ENCODE measurements at regions of chr11 and their contacts with region 1.

Region 1: GRCh38 chr11:22920939-22921565 is 60.8 kb upstream of the CCDC179 start:
- DNase-seq: no peak
- H3K4me3 ChIP-seq: peak overlapping the region in 1 of 2 donors; percentile 26
- H3K27ac ChIP-seq: peak overlapping the region in 1 of 2 donors; percentile 62
- H3K4me1 ChIP-seq: peaks cover 0 to 46% (median 2%) of the 10 kb centered on the region in 4 donors
- H3K27me3 ChIP-seq: no peaks in the 10 kb centered on the region
- CTCF ChIP-seq: peak; percentile 65 to 67

Region 2: GRCh38 chr11:23063276-23063675 is 142.2 kb after region 1 on chr11:
- intact Hi-C with region 1: no loop called
- DNase-seq: no peak
- H3K4me3 ChIP-seq: no peak overlapping the region
- H3K27ac ChIP-seq: no peak overlapping the region
- H3K4me1 ChIP-seq: peaks cover 0 to 4% (median 0%) of the 10 kb centered on the region in 4 donors
- H3K27me3 ChIP-seq: no peaks in the 10 kb centered on the region
- CTCF ChIP-seq: no peak

Region 3: DNA sequence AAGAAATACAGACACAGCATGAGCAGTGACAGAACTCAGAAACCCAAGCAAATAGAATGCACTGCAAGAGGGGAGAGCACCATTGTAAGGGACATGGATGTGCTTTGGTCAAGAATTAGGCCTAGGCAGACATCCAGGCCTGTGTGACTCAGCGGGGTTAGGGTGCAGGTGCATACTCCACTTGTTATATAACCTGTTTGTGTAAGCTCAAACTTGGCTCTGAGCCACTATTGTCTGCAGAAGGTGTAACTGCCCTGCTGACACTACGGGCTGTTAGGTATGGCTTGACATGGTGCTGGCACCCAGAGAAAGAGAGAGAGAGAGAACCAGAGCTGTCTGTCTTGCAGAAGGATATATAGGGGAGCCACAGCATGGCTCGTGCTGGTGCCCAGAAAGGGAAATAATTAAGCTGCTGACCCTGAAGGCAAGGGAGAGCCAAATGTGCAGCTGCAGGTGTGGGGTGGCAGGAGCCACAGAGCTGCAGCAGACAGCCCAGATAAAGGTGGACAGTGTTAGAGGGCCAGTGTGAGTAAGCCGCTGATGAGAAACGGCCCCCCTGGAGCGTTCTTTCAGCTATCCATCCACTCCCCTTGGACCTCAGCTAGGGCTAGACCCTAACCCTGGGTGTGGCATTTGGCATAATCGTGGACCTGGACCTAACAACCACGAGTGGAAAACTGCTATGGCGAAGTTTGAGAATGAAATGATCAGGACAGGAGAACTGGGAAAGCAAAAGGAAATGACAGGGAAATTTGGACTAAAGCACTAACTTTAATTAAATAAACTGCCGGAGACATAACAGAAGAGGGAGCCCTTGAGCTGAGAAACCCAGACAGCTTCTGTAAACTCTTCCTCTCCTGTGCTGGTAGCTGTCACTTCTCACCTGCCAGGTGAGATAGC is 192.2 kb after region 1 on chr11:
- intact Hi-C with region 1: loop called (anchors 10 kb)
- DNase-seq: no peak
- H3K4me3 ChIP-seq: no peak overlapping the region
- H3K27ac ChIP-seq: peak overlapping the region in 1 of 2 donors; percentile 30
- H3K4me1 ChIP-seq: peaks cover 0 to 23% (median 3%) of the 10 kb centered on the region in 4 donors
- H3K27me3 ChIP-seq: no peaks in the 10 kb centered on the region
- CTCF ChIP-seq: peak; percentile 49 to 51